ENCODE measurements at regions of chrX and their contacts with region 1.

Region 1: GRCh38 chrX:25020905-25021449 is 5.2 kb upstream of the ARX start:
- DNase-seq: no peak
- H3K4me3 ChIP-seq: peak overlapping the region; percentile 6 to 16 (median 10)
- H3K27ac ChIP-seq: no peak overlapping the region
- H3K4me1 ChIP-seq: peaks cover 19% of the 10 kb centered on the region
- H3K27me3 ChIP-seq: peaks cover 18% of the 10 kb centered on the region
- CTCF ChIP-seq: peak; percentile 24 to 66

Region 2: DNA sequence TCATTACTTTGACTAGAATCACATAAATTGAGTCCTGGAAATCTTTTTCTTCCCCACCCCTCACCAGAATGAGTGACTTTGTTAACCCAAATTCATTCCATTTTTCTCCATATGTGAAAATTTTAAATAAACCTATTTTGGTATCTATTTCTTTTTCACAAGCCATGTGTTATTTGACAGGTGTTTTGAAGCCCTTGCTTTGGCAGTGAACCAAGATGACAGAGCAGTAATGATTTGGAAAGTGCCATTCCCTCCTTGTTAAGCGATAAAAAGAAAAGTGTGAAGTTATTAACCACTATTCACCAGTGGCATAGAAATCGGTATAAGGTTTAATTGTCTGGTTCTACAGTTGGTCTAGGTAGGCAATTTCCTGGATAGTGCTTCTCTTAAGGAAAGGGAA is 261.2 kb before region 1 on chrX:
- CTCF ChIA-PET with region 1: no interaction called
- dilution Hi-C with region 1: no loop called
- in situ Hi-C with region 1: no loop called
- intact Hi-C with region 1: loop called (anchors 10 kb)
- DNase-seq: no peak
- H3K4me3 ChIP-seq: no peak overlapping the region
- H3K27ac ChIP-seq: no peak overlapping the region
- H3K4me1 ChIP-seq: no peaks in the 10 kb centered on the region
- H3K27me3 ChIP-seq: no peaks in the 10 kb centered on the region
- CTCF ChIP-seq: no peak

Region 3: GRCh38 chrX:24838629-24839028 is 182.3 kb before region 1 on chrX:
- CTCF ChIA-PET with region 1: no interaction called
- dilution Hi-C with region 1: no loop called
- in situ Hi-C with region 1: no loop called
- intact Hi-C with region 1: loop called (anchors 2 kb)
- DNase-seq: peak; percentile 6
- H3K4me3 ChIP-seq: no peak overlapping the region
- H3K27ac ChIP-seq: no peak overlapping the region
- H3K4me1 ChIP-seq: no peaks in the 10 kb centered on the region
- H3K27me3 ChIP-seq: no peaks in the 10 kb centered on the region
- CTCF ChIP-seq: peak; percentile 50 to 55

Region 4: DNA sequence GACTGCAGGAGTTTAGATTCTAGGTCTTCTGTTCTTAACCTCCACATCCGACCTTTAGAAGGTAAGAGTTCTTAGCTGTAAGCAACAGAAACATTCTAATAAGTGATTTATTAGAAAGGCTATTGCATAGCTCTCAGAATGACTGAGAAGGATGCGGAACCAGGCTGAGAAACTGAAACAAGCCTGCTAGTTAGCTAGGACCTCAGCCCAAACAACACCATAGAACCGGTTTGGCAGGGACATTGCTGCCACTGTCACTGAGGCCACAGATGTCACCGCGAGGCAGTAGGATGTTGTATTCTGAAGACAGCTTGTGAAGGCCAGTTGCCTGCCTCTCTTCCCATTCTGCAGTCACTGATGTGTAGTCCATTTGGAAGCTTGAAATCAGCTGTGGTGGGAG is 154.8 kb after region 1 on chrX:
- CTCF ChIA-PET with region 1: no interaction called
- dilution Hi-C with region 1: no loop called
- in situ Hi-C with region 1: no loop called
- intact Hi-C with region 1: no loop called
- DNase-seq: no peak
- H3K4me3 ChIP-seq: no peak overlapping the region
- H3K27ac ChIP-seq: no peak overlapping the region
- H3K4me1 ChIP-seq: no peaks in the 10 kb centered on the region
- H3K27me3 ChIP-seq: no peaks in the 10 kb centered on the region
- CTCF ChIP-seq: no peak

Measured in mammary epithelial cell (primary cell).